RWPE1 (cell line): ENCODE measurements at regions of chr11 and their contacts with region 1.

Region 1: GRCh38 chr11:65477149-65477965 is 21.5 kb upstream of the MALAT1 start:
- DNase-seq: peak; percentile 94
- H3K27ac ChIP-seq: peak overlapping the region; percentile 99
- CTCF ChIP-seq: no peak

Region 2: GRCh38 chr11:65487413-65488272 is 10.3 kb after region 1 on chr11:
- CTCF ChIA-PET with region 1: interaction called, 3 read pairs
- POLR2A ChIA-PET with region 1: interaction called, 19 read pairs
- DNase-seq: peak; percentile 99
- H3K27ac ChIP-seq: peak overlapping the region; percentile 99
- CTCF ChIP-seq: no peak

Region 3: GRCh38 chr11:65497141-65498041 is 20.0 kb after region 1 on chr11:
- CTCF ChIA-PET with region 1: interaction called, 4 read pairs
- POLR2A ChIA-PET with region 1: interaction called, 19 read pairs
- DNase-seq: peak; percentile 87
- H3K27ac ChIP-seq: peak overlapping the region; percentile 99
- CTCF ChIP-seq: no peak

Region 4: GRCh38 chr11:65506770-65507505 is 29.6 kb after region 1 on chr11:
- CTCF ChIA-PET with region 1: interaction called, 10 read pairs
- POLR2A ChIA-PET with region 1: interaction called, 6 read pairs
- DNase-seq: peak; percentile 55
- H3K27ac ChIP-seq: peak overlapping the region; percentile 98
- CTCF ChIP-seq: no peak